ENCODE measurements at regions of chr17 and their contacts with region 1.

Region 1: GRCh38 chr17:8785547-8786413 is 13.4 kb downstream of the MFSD6L start:
- DNase-seq: peak; percentile 77
- H3K4me3 Mint-ChIP-seq: no peak overlapping the region
- H3K27ac Mint-ChIP-seq: no peak overlapping the region
- H3K4me1 Mint-ChIP-seq: peaks cover 2% of the 10 kb centered on the region
- H3K27me3 Mint-ChIP-seq: peaks cover under 1% of the 10 kb centered on the region

Region 2: GRCh38 chr17:8514801-8515200 is 271.0 kb before region 1 on chr17:
- CTCF ChIA-PET with region 1: no interaction called
- POLR2A ChIA-PET with region 1: no interaction called
- intact Hi-C with region 1: no loop called
- DNase-seq: no peak
- H3K4me3 Mint-ChIP-seq: no peak overlapping the region
- H3K27ac Mint-ChIP-seq: no peak overlapping the region
- H3K4me1 Mint-ChIP-seq: no peaks in the 10 kb centered on the region
- H3K27me3 Mint-ChIP-seq: no peaks in the 10 kb centered on the region

Region 3: DNA sequence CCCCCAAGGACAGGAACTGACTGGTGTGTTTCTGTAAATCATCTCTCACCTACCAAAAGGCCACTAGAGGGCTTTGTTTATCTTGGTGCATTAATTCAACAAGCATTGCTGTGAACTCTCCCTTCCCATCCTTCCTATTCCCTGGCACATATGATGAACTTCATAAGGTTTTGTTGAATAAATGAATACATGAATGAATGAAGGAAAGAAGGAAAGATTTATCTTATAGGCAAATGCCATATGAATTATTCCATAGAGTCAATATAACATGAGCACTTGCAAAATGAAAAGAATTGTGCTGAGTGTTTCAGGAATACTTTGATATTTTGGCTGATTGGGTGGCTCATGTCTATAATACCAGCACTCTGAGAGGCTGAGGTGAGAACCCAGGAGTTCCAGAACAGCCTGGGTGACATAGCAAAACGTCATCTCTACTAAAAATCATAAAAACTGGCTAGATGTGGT is 31.8 kb before region 1 on chr17:
- CTCF ChIA-PET with region 1: interaction called, 17 read pairs
- POLR2A ChIA-PET with region 1: no interaction called
- intact Hi-C with region 1: no loop called
- DNase-seq: no peak
- H3K4me3 Mint-ChIP-seq: no peak overlapping the region
- H3K27ac Mint-ChIP-seq: no peak overlapping the region
- H3K4me1 Mint-ChIP-seq: no peaks in the 10 kb centered on the region
- H3K27me3 Mint-ChIP-seq: peaks cover 8% of the 10 kb centered on the region

Measured in activated CD4-positive, alpha-beta memory T cell treated with anti-CD3 and anti-CD28 coated beads for 36 hours (primary cell).